ENCODE measurements at regions of chr1 and their contacts with region 1.

Region 1: DNA sequence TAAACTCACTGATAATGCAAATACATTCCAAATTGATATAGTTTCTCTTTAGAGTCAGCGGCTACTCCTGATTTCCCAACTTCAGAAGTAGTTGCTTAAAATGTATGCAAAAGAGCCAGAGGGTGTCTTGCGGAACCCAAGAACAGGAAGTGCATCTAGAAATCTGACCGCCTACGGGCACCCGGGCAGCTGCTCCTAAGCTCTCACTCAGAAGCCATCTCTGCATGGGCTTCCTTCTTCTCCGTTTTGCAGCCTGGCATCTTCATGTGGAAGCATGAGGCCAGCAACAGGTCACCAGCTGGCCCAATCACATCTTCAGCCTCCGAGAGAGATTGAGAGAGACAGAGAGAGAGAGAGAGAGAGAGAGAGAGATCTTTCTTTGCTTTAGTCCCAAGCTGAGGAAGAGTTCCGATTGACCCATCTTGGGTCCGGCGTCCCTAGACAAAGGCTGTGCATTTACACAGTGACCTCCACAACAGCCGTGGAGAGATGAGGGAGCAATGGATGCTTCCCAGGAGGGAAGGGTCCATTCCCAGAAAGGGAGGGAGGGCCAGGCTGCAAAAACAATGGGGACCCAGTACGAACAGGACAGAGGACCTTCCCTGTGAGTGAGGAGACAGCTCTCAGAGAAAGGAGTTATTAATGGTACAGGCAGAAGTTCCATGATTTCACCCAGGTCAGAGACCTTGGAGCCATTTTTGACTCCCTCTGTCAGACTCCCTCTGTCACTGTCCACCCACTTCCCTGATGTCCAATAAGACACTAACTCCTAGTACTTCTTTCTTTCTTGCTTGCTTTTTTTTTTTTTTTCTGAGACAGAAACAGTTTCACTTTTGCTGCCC is 28.2 kb upstream of the SLC30A1 start:
- DNase-seq: no peak
- ATAC-seq: no peak
- H3K4me3 ChIP-seq: peak overlapping the region; percentile 42 to 65 (median 48)
- H3K27ac ChIP-seq: no peak overlapping the region
- H3K4me1 ChIP-seq: peaks cover 93% of the 10 kb centered on the region
- H3K27me3 ChIP-seq: no peaks in the 10 kb centered on the region
- CTCF ChIP-seq: no peak
- EP300 ChIP-seq: no peak
- POLR2A ChIP-seq: no peak
- RAD21 ChIP-seq: no peak

Region 2: DNA sequence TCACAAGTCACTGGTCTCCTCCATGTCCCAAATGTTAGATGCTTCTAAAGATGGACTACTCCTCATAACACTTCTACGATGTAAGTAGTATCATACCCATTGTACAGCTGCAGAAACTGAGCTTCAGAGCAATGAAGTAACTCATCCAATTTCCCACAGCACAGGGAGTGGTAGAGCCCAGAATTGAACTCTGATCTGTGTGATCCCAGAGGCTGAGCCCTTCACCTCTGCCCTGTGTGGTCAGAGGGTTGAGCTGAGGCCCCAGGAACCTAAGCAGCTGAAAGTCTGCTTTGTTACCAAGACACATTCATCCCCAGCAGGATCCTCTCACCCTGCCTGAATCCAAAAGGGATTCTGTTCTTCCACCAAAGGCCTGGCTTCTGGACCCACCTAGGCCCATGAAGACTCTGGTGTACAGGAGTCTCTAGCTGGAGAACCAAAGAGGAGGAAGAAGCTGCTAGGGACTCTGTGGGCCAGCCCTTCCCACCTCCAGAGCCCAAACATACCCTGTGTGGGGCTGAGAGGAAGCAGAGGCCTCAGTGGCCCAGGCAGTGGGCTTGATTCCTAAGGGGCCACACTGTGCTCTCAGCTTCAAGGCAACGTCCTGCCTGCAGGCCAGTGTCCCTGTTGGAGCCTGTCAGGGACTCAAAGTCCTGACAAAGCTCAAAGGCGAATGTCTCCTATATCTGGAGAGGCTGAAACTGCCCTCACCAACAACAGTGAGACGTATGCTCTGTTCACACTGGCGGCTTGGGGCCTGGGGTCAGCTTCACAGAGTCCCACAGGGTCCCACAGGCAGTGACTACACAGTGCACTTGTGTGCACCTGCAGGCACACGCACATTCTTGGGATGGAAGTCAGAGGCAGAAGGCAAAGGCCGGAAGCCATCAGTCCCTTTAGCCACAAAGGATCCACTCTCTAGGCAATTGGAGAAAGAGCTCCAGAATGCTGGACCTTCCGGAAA is 12.2 kb after region 1 on chr1:
- CTCF ChIA-PET with region 1: no interaction called
- POLR2A ChIA-PET with region 1: interaction called, 12 read pairs
- in situ Hi-C with region 1: no loop called
- intact Hi-C with region 1: no loop called
- DNase-seq: peak; percentile 75
- ATAC-seq: peak; percentile 78
- H3K4me3 ChIP-seq: peak overlapping the region in 1 of 3 experiments; percentile 51; a peak in 2 of 6 replicates
- H3K27ac ChIP-seq: peak overlapping the region; percentile 50
- H3K4me1 ChIP-seq: peaks cover 72% of the 10 kb centered on the region
- H3K27me3 ChIP-seq: peaks cover 0 to 2% of the 10 kb centered on the region in 2 experiments; a peak in 1 of 5 replicates
- CTCF ChIP-seq: 0 out of 2 replicates have a peak, but pooled peaks have one; percentile 6
- EP300 ChIP-seq: peak; percentile 65; a peak in 2 of 4 replicates
- POLR2A ChIP-seq: no peak
- RAD21 ChIP-seq: no peak

Measured in HepG2 (cell line).